ENCODE measurements at regions of chr7 and their contacts with region 1.

Region 1: GRCh38 chr7:75704928-75705327 is 33.8 kb downstream of the HIP1 start:
- DNase-seq: no peak
- H3K4me3 ChIP-seq: no peak overlapping the region
- H3K27ac ChIP-seq: no peak overlapping the region
- H3K4me1 ChIP-seq: no peaks in the 10 kb centered on the region
- H3K27me3 ChIP-seq: no peaks in the 10 kb centered on the region
- CTCF ChIP-seq: no peak
- EP300 ChIP-seq: no peak
- POLR2A ChIP-seq: no peak

Region 2: DNA sequence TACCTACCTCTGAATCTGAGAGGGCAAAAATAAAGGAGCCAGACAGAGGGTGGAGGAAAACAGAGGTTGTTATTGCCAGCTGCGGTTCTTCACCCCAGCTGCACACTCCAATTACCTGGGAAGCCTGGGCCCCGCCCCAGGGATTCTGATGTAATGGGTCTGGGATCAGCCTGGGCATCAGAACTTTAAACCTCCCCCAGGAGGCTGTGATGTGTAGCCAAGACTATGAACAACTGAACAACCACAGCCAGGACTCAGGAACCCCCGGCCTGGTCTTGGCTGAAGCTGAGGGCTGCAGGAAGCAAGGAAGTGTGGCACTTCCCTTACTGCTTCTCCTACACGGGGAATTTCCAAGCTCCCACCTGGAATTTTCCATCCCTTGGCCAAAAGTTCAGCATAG is 55.5 kb before region 1 on chr7:
- in situ Hi-C with region 1: loop called in 1 of 4 experiments (anchors 5 kb)
- intact Hi-C with region 1: no loop called
- DNase-seq: no peak
- H3K4me3 ChIP-seq: no peak overlapping the region
- H3K27ac ChIP-seq: peak overlapping the region in 2 of 4 donors; percentile 2 to 24
- H3K4me1 ChIP-seq: no peaks in the 10 kb centered on the region
- H3K27me3 ChIP-seq: no peaks in the 10 kb centered on the region
- CTCF ChIP-seq: no peak
- EP300 ChIP-seq: no peak
- POLR2A ChIP-seq: no peak

Region 3: GRCh38 chr7:75687246-75688088 is 17.5 kb before region 1 on chr7:
- in situ Hi-C with region 1: no loop called
- intact Hi-C with region 1: loop called (anchors 2 kb)
- DNase-seq: no peak
- H3K4me3 ChIP-seq: no peak overlapping the region
- H3K27ac ChIP-seq: no peak overlapping the region
- H3K4me1 ChIP-seq: peaks cover 0 to 6% (median 2%) of the 10 kb centered on the region in 4 donors
- H3K27me3 ChIP-seq: no peaks in the 10 kb centered on the region
- CTCF ChIP-seq: no peak
- EP300 ChIP-seq: no peak
- POLR2A ChIP-seq: no peak